GM13976 (cell line): ENCODE measurements at regions of chr2 and their contacts with region 1.

Region 1: DNA sequence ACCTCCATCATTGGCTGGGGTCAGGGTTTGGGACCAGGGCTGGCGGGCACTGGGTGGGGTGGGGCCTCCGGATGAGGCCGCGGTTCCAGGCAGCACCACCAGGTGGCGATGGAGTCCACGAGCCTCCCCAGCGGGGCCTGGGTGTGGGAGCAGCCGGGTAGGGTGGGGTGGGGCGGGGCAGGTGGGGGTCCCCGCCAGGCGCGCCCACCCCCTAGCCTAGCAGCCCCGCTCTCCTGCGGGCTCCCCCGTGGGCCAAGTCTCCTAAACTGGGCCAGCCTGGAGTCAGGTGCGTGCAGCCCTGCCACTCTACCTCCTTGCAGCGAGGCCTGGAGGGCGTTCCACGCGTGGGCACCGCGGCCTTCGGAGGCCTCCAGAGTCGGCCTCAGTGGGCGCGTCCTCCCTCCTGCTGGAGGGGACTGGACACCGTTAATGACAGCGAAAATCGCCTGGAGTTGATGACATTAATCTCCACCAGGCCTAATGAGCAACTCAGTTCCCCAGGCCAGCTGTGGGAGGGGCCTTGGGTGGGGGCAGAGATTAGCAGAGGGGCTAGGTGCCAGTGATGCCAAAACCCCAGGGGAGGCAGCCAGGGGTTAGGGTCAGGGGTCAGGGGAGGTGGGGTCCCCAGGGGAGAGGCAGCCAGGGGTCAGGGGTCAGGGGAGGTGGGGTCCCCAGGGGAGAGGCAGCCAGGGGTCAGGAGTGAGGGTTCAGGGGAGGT is 187.6 kb downstream of the TWIST2 start:
- DNase-seq: peak; percentile 93
- CTCF ChIP-seq: peak; percentile 92

Region 2: GRCh38 chr2:238875101-238875470 is 160.4 kb before region 1 on chr2:
- in situ Hi-C with region 1: no loop called
- DNase-seq: no peak
- CTCF ChIP-seq: no peak

Region 3: DNA sequence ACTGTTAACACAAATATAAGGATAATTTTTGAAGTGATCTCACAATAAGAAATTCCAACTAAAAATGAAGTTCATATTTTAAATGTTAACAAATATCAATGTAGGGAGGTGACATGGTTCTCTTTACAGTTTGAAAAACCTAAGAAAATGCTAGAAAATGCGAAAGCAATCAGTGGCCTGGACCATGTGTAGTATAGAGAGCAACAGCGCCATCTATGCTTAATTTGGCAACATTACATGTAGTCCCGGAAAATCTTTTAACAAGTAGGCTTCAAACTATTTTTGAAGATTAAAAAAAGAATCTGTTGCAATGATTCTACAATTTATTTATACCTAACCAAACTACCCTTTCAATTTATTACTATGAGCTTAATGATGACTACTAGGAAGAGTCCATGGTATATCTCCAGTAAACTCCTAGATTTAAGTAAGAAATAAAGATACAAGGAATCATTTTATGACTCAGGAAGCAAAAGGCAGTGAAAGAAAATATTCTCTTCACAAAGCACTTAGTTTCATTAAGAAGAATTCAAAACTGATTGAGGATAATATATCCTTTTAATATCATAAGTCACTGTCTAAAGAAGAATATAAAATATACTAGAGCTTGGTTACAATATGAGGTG is 956.3 kb after region 1 on chr2:
- in situ Hi-C with region 1: loop called (anchors 25 kb)
- DNase-seq: peak; percentile 53
- CTCF ChIP-seq: peak; percentile 68